Caco-2 (cell line): ENCODE measurements at regions of chr13 and their contacts with region 1.

Region 1: DNA sequence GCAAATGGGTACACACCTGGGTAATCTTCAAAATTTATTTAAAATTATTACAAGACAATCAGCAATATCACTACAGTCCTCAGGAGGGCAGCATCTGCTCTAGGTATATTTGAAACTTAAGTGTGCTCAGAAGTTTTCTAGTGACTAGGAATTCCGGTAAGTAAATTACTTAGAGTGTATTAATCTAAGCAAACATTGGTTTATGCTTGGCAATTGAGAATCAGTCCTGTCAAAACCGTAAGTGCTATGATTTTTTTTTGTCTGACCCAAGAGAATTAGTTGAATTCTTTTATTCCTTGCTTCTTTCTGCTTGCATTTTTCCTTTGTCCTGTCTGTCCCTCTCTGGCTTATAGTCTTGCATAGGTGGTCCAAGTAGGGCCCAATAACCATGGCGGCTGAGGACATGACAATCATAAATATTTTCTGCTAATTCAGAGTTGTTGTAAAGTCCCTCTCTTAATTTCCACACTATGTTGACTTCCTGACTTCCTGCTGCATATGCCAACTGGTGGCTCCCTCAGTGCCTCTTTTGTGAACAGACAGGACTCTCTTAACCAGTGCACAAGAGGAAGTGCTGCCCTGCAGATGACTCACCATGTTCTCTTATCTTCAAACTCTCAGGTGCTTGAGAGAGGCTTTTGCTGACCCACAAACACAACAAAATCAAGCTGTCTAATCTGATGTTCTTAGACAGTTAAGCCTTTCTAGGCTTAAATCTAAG is 82.2 kb downstream of the SLAIN1 start:
- DNase-seq: peak in 1 of 2 experiments; percentile 44
- H3K4me3 ChIP-seq: no peak overlapping the region
- H3K4me3 Mint-ChIP-seq: no peak overlapping the region
- H3K27ac Mint-ChIP-seq: no peak overlapping the region
- H3K4me1 ChIP-seq: no peaks in the 10 kb centered on the region
- H3K4me1 Mint-ChIP-seq: peaks cover 12% of the 10 kb centered on the region
- H3K27me3 ChIP-seq: no peaks in the 10 kb centered on the region; the same call in 1 of the 2 replicates
- H3K27me3 Mint-ChIP-seq: peaks cover 6% of the 10 kb centered on the region
- CTCF ChIP-seq: peak; percentile 64 to 74

Region 2: DNA sequence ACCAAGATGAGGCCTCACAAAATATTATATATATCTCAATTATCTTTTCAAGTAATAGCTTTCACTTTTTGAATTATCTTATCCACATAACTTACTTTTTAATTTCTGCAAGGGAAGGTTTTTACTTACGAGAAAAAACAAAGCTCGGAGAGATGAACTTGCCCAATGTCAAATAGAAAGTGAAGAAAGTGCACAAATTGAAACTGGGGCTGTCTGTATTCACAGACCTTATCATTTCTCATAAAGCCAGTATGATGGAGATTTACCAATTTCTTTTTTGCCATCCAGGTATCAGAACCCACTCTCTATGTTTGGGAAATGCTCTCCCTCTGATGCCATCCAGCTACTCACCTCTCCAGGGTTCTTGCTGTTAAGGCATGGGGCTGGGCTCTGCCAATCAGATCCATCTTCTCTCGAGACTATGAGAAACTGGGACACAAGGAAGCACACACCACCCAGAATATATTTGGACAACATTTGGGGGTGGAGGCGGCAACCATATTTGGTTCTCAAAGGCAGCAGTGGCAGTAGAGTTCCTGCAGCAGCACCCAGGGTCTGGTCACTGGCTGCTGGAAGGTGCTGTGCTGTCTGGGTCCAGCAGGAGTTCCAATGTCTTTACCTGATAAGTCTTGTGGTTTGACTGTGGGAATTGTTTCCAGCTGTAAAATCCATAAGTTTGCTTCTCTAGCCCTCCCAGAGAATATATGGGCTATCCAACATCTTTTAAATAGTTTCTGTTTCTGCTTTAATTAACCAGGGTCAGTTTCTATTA is 290.0 kb before region 1 on chr13:
- CTCF ChIA-PET with region 1: no interaction called
- POLR2A ChIA-PET with region 1: no interaction called
- intact Hi-C with region 1: no loop called
- DNase-seq: no peak
- H3K4me3 ChIP-seq: no peak overlapping the region
- H3K4me3 Mint-ChIP-seq: no peak overlapping the region
- H3K27ac Mint-ChIP-seq: no peak overlapping the region
- H3K4me1 ChIP-seq: no peaks in the 10 kb centered on the region
- H3K4me1 Mint-ChIP-seq: no peaks in the 10 kb centered on the region
- H3K27me3 ChIP-seq: no peaks in the 10 kb centered on the region
- H3K27me3 Mint-ChIP-seq: peaks cover 10% of the 10 kb centered on the region
- CTCF ChIP-seq: no peak

Region 3: GRCh38 chr13:78012040-78012439 is 232.3 kb after region 1 on chr13:
- CTCF ChIA-PET with region 1: no interaction called
- POLR2A ChIA-PET with region 1: no interaction called
- intact Hi-C with region 1: loop called (anchors 1 kb)
- DNase-seq: no peak
- H3K4me3 ChIP-seq: no peak overlapping the region
- H3K4me3 Mint-ChIP-seq: no peak overlapping the region
- H3K27ac Mint-ChIP-seq: no peak overlapping the region
- H3K4me1 ChIP-seq: no peaks in the 10 kb centered on the region
- H3K4me1 Mint-ChIP-seq: no peaks in the 10 kb centered on the region
- H3K27me3 ChIP-seq: no peaks in the 10 kb centered on the region
- H3K27me3 Mint-ChIP-seq: no peaks in the 10 kb centered on the region
- CTCF ChIP-seq: peak in 1 of 2 experiments; percentile 36

Region 4: DNA sequence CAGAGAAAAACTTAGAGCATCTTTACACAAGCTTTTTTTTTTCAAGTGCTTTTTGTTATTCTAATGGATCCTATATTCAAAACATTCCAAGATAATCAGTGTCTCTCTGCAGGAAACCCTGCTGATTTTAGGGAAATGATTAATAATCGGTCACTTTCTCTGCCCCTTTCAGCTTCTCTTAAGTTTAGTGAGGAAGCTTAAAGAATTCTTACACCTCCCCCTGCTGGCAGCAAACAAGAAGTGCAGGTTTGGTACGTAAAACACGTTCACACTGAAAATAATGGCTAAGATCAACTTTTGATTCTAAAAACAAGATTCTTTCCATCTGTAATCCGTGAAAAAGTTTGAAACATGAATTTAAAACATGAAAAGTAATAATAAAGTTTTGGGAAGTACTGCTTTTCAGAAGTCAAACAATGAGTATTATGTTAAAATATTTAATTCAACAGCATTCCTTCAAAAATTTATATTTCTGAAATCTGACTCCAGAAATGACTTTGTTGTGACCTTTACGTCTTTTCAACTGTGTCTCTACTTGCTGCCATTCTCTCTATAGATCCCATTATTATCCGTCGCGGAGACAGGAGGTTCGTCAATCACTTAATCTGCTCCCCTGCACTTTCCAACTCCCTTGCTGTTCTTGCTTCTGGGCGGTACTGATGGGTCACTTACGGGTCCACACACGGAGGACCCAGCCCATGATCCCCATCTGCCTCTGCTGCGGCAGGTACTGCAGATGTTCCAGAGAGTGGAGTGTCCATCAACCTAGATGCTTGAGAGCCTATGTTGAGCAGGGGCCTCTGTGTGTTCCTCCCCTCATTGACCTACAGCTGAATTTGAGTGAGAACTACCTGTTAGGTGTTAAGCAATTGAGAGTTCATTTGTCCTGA is 342.0 kb after region 1 on chr13:
- CTCF ChIA-PET with region 1: interaction called, 10 read pairs
- POLR2A ChIA-PET with region 1: no interaction called
- intact Hi-C with region 1: loop called (anchors 1 kb)
- DNase-seq: peak; percentile 42 to 55
- H3K4me3 ChIP-seq: no peak overlapping the region
- H3K4me3 Mint-ChIP-seq: no peak overlapping the region
- H3K27ac Mint-ChIP-seq: no peak overlapping the region
- H3K4me1 ChIP-seq: no peaks in the 10 kb centered on the region
- H3K4me1 Mint-ChIP-seq: no peaks in the 10 kb centered on the region
- H3K27me3 ChIP-seq: no peaks in the 10 kb centered on the region
- H3K27me3 Mint-ChIP-seq: peaks cover 15% of the 10 kb centered on the region
- CTCF ChIP-seq: peak; percentile 83 to 87